ENCODE measurements at regions of chr4 and their contacts with region 1.

Region 1: DNA sequence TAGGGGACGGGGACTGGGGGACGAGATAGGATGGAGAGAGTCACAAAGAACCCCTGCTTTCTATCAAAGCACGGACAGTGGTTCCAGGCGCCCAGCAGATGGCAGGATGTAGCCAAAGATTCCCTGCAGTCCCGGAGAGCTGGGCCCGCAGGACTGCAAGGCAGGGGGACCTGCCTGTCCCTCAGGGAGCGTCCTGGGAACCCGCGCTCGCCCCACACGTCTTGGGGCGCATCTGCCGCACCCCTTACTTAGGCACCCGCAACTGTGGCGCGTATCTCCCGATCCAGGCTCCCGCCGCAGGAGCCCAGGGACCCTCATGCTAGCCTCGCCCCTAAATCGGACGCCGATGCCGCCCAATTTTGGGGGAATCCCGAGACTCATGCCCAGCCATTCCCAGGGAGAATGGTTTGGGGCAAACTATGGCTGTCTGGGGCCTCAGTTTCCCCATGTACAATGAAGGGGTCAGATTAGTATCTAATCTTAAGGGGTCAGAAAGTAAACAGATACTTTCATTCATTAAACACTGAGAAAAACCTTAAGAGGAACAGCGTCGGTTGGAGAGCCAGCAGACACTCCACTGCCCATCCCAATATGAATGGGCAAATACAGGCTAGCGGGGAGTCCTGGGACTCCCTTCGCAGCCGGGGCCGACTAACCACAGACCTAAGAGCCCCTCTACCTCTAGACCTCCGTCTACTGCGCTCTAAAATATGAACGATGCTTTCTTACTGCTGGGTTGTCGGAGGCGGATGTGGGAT is 581 bp upstream of the STK32B start:
- DNase-seq: peak; percentile 83
- ATAC-seq: peak; percentile 76
- H3K4me3 ChIP-seq: peak overlapping the region; percentile 53
- H3K27ac ChIP-seq: peak overlapping the region; percentile 61
- H3K4me1 ChIP-seq: peaks cover 2% of the 10 kb centered on the region; the same call in 1 of the 2 replicates
- H3K27me3 ChIP-seq: no peaks in the 10 kb centered on the region
- CTCF ChIP-seq: peak; percentile 85
- POLR2A ChIP-seq: peak; percentile 6; the same call in 1 of the 2 replicates
- RAD21 ChIP-seq: peak; percentile 90

Region 2: GRCh38 chr4:4488405-4489404 is 562.0 kb before region 1 on chr4:
- CTCF ChIA-PET with region 1: no interaction called
- POLR2A ChIA-PET with region 1: no interaction called
- dilution Hi-C with region 1: no loop called
- in situ Hi-C with region 1: no loop called
- intact Hi-C with region 1: loop called (anchors 5 kb)
- DNase-seq: peak; percentile 83
- ATAC-seq: peak; percentile 92
- H3K4me3 ChIP-seq: no peak overlapping the region
- H3K27ac ChIP-seq: no peak overlapping the region
- H3K4me1 ChIP-seq: 0 out of 2 replicates have a peak, but pooled peaks cover 2% of the 10 kb centered on the region
- H3K27me3 ChIP-seq: no peaks in the 10 kb centered on the region
- CTCF ChIP-seq: peak; percentile 91
- POLR2A ChIP-seq: no peak
- RAD21 ChIP-seq: peak; percentile 93

Region 3: GRCh38 chr4:5249727-5250126 is 199.0 kb after region 1 on chr4:
- CTCF ChIA-PET with region 1: no interaction called
- POLR2A ChIA-PET with region 1: no interaction called
- dilution Hi-C with region 1: no loop called
- in situ Hi-C with region 1: no loop called
- intact Hi-C with region 1: loop called (anchors 10 kb)
- DNase-seq: no peak
- ATAC-seq: no peak
- H3K4me3 ChIP-seq: no peak overlapping the region
- H3K27ac ChIP-seq: no peak overlapping the region
- H3K4me1 ChIP-seq: no peaks in the 10 kb centered on the region
- H3K27me3 ChIP-seq: no peaks in the 10 kb centered on the region
- CTCF ChIP-seq: no peak
- POLR2A ChIP-seq: no peak
- RAD21 ChIP-seq: no peak

Region 4: DNA sequence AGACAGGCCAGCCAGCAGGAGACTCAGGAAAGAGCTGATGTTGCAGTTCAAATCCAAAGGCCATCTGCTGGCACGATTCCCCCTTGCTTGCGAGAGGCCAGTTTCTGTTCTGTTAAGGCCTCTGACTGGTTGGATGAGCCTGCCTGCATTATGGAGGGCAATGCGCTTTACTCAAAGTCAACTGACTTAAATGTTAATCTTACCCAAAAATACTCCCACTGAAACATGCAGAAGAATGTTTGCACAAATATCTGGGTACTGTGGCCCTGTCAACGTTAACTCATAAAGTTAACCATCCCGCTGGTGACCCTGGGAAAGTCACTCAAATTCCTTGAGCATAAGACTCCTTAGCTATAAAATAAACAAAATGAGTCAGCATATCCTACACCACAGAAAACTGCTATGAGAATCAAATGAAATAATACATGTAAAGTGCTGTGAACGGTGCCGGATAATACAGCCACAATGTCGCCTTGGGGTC is 331.3 kb after region 1 on chr4:
- CTCF ChIA-PET with region 1: no interaction called
- POLR2A ChIA-PET with region 1: no interaction called
- dilution Hi-C with region 1: no loop called
- in situ Hi-C with region 1: no loop called
- intact Hi-C with region 1: loop called (anchors 5 kb)
- DNase-seq: peak; percentile 94
- ATAC-seq: peak; percentile 70
- H3K4me3 ChIP-seq: no peak overlapping the region
- H3K27ac ChIP-seq: peak overlapping the region; percentile 86
- H3K4me1 ChIP-seq: peaks cover 29% of the 10 kb centered on the region
- H3K27me3 ChIP-seq: no peaks in the 10 kb centered on the region
- CTCF ChIP-seq: no peak
- POLR2A ChIP-seq: 0 out of 2 replicates have a peak, but pooled peaks have one; percentile 11
- RAD21 ChIP-seq: no peak

Region 5: DNA sequence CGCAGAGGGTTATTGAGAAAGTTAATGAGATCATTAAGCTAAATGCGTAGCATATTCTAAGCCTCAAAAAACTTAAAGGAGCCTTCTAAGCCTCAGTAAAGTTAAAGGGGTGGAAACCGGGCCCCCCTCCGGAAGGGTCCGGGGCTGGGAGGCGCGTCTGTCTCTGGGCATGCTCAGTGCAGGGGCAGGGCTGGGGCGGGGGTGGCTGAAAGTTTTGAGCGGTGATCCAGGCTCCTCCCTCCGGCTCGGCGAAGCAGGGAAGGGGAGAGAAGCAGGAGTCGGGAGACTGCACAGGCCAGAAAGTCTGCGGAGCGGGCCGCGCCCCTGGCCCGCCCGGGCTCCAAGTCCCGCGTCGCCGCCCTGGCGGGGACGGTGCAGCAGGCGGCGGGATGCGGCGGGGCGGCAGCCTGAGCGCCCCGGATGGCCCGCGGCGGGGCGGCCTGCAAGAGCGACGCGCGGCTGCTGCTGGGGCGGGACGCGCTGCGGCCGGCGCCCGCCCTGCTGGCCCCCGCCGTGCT is 660.3 kb after region 1 on chr4 and contains the start of gene EVC:
- CTCF ChIA-PET with region 1: no interaction called
- POLR2A ChIA-PET with region 1: no interaction called
- dilution Hi-C with region 1: no loop called
- in situ Hi-C with region 1: no loop called
- intact Hi-C with region 1: loop called (anchors 5 kb)
- DNase-seq: peak; percentile 74
- ATAC-seq: peak; percentile 92
- H3K4me3 ChIP-seq: peak within 1 kb of the TSS; percentile 83
- H3K27ac ChIP-seq: peak within 1 kb of the TSS; percentile 90
- H3K4me1 ChIP-seq: peaks cover 33% of the 10 kb centered on the region
- H3K27me3 ChIP-seq: no peaks in the 10 kb centered on the region
- CTCF ChIP-seq: 0 out of 2 replicates have a peak, but pooled peaks have one; percentile 4
- POLR2A ChIP-seq: peak; percentile 63
- RAD21 ChIP-seq: no peak
- total RNA-seq, gene EVC: 15.3 and 16.8 TPM in 2 replicates

Region 6: GRCh38 chr4:5812506-5813229 is 762.0 kb after region 1 on chr4:
- CTCF ChIA-PET with region 1: interaction called, 3 read pairs
- POLR2A ChIA-PET with region 1: no interaction called
- dilution Hi-C with region 1: no loop called
- in situ Hi-C with region 1: no loop called
- intact Hi-C with region 1: loop called (anchors 5 kb)
- DNase-seq: peak; percentile 80
- ATAC-seq: peak; percentile 93
- H3K4me3 ChIP-seq: no peak overlapping the region
- H3K27ac ChIP-seq: no peak overlapping the region
- H3K4me1 ChIP-seq: no peaks in the 10 kb centered on the region
- H3K27me3 ChIP-seq: no peaks in the 10 kb centered on the region
- CTCF ChIP-seq: peak; percentile 84
- POLR2A ChIP-seq: no peak
- RAD21 ChIP-seq: peak; percentile 83

Measured in IMR-90 (cell line).